Right ventricle myocardium inferior (tissue), 1 donor: ENCODE measurements at regions of chr2 and their contacts with region 1.

Region 1: GRCh38 chr2:177604271-177605065 is 211.9 kb downstream of the AGPS start:
- DNase-seq: no peak
- ATAC-seq: peak; percentile 76

Region 2: GRCh38 chr2:177445200-177445599 is 159.3 kb before region 1 on chr2:
- intact Hi-C with region 1: no loop called
- DNase-seq: no peak
- ATAC-seq: no peak

Region 3: GRCh38 chr2:177552422-177553175 is 51.9 kb before region 1 on chr2:
- intact Hi-C with region 1: loop called (anchors 5 kb)
- DNase-seq: peak; percentile 95
- ATAC-seq: peak; percentile 97

Region 4: GRCh38 chr2:177568390-177568789 is 36.1 kb before region 1 on chr2:
- intact Hi-C with region 1: no loop called
- DNase-seq: no peak
- ATAC-seq: no peak

Region 5: DNA sequence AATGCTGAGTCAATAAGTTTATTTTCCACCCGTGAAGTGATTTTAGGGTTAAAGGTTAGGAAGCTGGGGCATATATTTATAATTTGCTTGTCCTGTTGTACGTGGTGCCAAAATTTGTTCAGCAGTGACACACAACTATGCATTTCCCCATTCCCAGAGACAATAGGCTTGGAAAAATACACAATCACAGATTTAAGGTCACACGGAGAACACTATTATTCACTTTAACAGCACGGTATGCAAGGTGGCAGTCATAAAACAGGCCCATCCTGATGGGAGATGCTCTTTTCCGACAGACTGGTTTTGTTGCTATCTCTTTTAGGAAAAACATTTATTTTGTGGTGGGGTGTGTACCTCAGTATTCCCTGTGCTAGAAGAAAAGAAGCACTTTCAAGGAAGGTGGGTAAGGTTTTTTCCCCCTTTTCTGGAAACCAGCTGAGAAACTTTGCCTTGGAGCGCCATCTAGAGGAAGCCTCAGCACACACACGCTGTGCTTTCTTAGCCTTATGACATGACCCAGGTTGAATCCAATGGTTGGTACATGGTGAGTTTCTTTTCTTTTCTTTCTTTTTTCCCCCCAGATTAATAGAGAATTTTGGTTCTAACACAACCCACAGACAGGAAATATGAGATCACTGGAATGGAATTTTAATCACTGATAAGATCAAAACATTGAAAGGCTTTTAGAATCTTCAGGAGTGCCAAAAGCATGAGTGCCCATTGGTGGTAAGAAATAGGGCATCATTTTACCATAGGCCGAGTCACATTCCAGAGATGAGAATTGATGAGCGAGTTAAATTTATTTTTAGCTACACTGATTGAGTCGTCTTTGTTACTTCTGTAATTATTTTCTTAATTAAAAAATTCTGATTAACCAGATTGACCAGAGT is 120.2 kb after region 1 on chr2:
- intact Hi-C with region 1: loop called (anchors 10 kb)
- DNase-seq: no peak
- ATAC-seq: peak; percentile 63